CD14-positive monocyte (primary cell): ENCODE measurements at regions of chr10 and their contacts with region 1.

Region 1: GRCh38 chr10:51950371-51950995 is 251.1 kb upstream of the CSTF2T start:
- DNase-seq: no peak
- H3K4me3 ChIP-seq: no peak overlapping the region
- H3K4me3 Mint-ChIP-seq: no peak overlapping the region
- H3K27ac ChIP-seq: no peak overlapping the region
- H3K27ac Mint-ChIP-seq: no peak overlapping the region
- H3K4me1 ChIP-seq: no peaks in the 10 kb centered on the region
- H3K4me1 Mint-ChIP-seq: no peaks in the 10 kb centered on the region
- H3K27me3 ChIP-seq: no peaks in the 10 kb centered on the region
- H3K27me3 Mint-ChIP-seq: peaks cover 0 to 3% (median 0%) of the 10 kb centered on the region in 3 donors
- CTCF ChIP-seq: no peak

Region 2: GRCh38 chr10:51010977-51011376 is 939.5 kb before region 1 on chr10:
- intact Hi-C with region 1: loop called in 1 of 2 experiments (anchors 10 kb)
- DNase-seq: peak in 1 of 3 donors; percentile 8
- H3K4me3 ChIP-seq: no peak overlapping the region
- H3K4me3 Mint-ChIP-seq: no peak overlapping the region
- H3K27ac ChIP-seq: no peak overlapping the region
- H3K27ac Mint-ChIP-seq: no peak overlapping the region
- H3K4me1 ChIP-seq: no peaks in the 10 kb centered on the region
- H3K4me1 Mint-ChIP-seq: no peaks in the 10 kb centered on the region
- H3K27me3 ChIP-seq: no peaks in the 10 kb centered on the region
- H3K27me3 Mint-ChIP-seq: peaks cover 0 to 1% (median 0%) of the 10 kb centered on the region in 3 donors
- CTCF ChIP-seq: peak; percentile 78

Region 3: DNA sequence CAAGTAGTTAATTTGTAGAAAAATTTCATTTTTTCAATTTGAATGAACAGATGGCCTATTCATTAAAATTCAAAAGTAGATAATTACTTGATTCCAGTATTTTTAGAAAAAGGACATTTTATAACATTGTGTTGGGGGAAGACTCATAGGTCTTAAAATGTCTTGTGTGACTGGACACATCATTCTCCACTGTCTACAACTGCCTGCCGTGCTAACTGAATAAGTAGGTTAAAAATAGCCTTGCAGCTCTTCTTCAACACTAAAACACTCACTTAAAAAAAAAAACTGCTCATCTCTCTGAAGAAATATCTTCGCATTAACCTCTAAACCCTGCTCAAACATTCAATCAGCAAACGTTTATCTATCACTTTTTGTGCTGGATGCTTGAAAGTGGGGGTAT is 504.9 kb before region 1 on chr10:
- intact Hi-C with region 1: no loop called
- DNase-seq: no peak
- H3K4me3 ChIP-seq: no peak overlapping the region
- H3K4me3 Mint-ChIP-seq: no peak overlapping the region
- H3K27ac ChIP-seq: no peak overlapping the region
- H3K27ac Mint-ChIP-seq: no peak overlapping the region
- H3K4me1 ChIP-seq: no peaks in the 10 kb centered on the region
- H3K4me1 Mint-ChIP-seq: no peaks in the 10 kb centered on the region
- H3K27me3 ChIP-seq: no peaks in the 10 kb centered on the region
- H3K27me3 Mint-ChIP-seq: no peaks in the 10 kb centered on the region
- CTCF ChIP-seq: no peak